CD4-positive, alpha-beta T cell (primary cell): ENCODE measurements at regions of chr16 and their contacts with region 1.

Region 1: GRCh38 chr16:2267913-2268666 is at the start of gene RNPS1:
- DNase-seq: peak; percentile 87 to 98 (median 96)
- ATAC-seq: peak; percentile 76
- H3K4me3 ChIP-seq: peak within 1 kb of the TSS; percentile 85
- H3K4me3 Mint-ChIP-seq: peak within 1 kb of the TSS; percentile 99
- H3K27ac ChIP-seq: peak within 1 kb of the TSS; percentile 92 to 99
- H3K27ac Mint-ChIP-seq: peak within 1 kb of the TSS; percentile 100
- H3K4me1 ChIP-seq: peaks cover 35% of the 10 kb centered on the region
- H3K4me1 Mint-ChIP-seq: peaks cover 41% of the 10 kb centered on the region
- H3K27me3 ChIP-seq: no peaks in the 10 kb centered on the region
- H3K27me3 Mint-ChIP-seq: no peaks in the 10 kb centered on the region
- CTCF ChIP-seq: no peak
- total RNA-seq, gene RNPS1: 211 to 214 TPM

Region 2: DNA sequence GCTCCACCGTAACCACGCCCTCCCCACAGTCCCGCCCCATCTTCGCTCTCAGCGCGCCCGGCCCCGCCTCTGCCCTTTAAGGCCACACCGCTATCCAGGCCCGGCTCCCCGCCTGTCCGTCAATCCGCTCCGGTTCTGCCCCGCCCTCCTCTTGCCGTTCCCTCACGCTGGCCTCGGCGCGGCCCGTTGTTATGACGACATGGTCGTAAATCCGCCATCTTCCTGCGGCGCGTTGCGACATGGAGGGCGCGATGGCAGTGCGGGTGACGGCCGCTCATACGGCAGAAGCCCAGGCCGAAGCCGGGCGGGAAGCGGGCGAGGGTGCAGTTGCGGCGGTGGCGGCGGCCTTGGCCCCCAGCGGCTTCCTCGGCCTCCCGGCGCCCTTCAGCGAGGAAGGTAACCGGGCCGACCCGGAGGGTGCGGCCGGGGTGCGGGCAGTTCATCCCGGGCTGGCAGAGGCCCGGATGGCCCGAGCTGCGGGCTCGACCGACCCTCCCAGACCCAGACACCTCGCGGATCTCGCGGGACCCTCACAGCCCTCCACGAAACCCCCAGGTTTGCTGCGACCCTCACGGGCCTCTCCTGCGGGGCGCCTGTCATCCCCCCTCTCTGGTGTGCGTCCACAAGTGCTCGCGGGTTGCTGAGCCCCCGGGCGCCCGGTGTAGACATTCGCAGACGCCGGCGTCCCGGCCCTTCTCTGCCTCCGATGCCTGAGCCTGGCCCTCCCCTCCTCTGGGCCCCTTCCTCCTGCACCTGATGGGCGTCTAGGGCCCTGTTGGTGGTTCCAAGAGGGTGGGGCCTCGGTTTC is 44.5 kb before region 1 on chr16 and contains the start of gene E4F1:
- CTCF ChIA-PET with region 1: no interaction called
- POLR2A ChIA-PET with region 1: no interaction called
- intact Hi-C with region 1: loop called in 1 of 2 experiments (anchors 1 kb)
- DNase-seq: peak; percentile 97 to 100 (median 99)
- ATAC-seq: peak; percentile 95
- H3K4me3 ChIP-seq: peak within 1 kb of the TSS; percentile 80
- H3K4me3 Mint-ChIP-seq: peak within 1 kb of the TSS; percentile 89
- H3K27ac ChIP-seq: peak within 1 kb of the TSS; percentile 42 to 55
- H3K27ac Mint-ChIP-seq: peak within 1 kb of the TSS; percentile 62
- H3K4me1 ChIP-seq: peaks cover 30% of the 10 kb centered on the region
- H3K4me1 Mint-ChIP-seq: peaks cover 15% of the 10 kb centered on the region
- H3K27me3 ChIP-seq: no peaks in the 10 kb centered on the region
- H3K27me3 Mint-ChIP-seq: no peaks in the 10 kb centered on the region
- CTCF ChIP-seq: no peak
- total RNA-seq, gene E4F1: 31.8 to 33.8 TPM